ENCODE measurements at regions of chr22 and their contacts with region 1.

Region 1: GRCh38 chr22:41697126-41697775 is 2.1 kb upstream of the MEI1 start:
- DNase-seq: peak; percentile 73 to 94 (median 84)
- ATAC-seq: peak; percentile 91
- H3K4me3 ChIP-seq: peak overlapping the region; percentile 44
- H3K4me3 Mint-ChIP-seq: peak overlapping the region; percentile 44 to 80 (median 68)
- H3K27ac ChIP-seq: peak overlapping the region; percentile 5
- H3K27ac Mint-ChIP-seq: peak overlapping the region; percentile 16 to 90 (median 85)
- H3K4me1 ChIP-seq: peaks cover 7 to 10% of the 10 kb centered on the region in 2 donors
- H3K4me1 Mint-ChIP-seq: peaks cover 10 to 16% (median 13%) of the 10 kb centered on the region in 7 donors
- H3K27me3 ChIP-seq: no peaks in the 10 kb centered on the region
- H3K27me3 Mint-ChIP-seq: peaks cover 0 to 3% (median 0%) of the 10 kb centered on the region in 5 donors

Region 2: GRCh38 chr22:41666661-41667258 is 30.5 kb before region 1 on chr22:
- CTCF ChIA-PET with region 1: interaction called, 13 read pairs
- POLR2A ChIA-PET with region 1: interaction called, 4 read pairs
- intact Hi-C with region 1: loop called in 1 of 2 experiments (anchors 1 kb)
- DNase-seq: peak; percentile 88 to 97 (median 95)
- ATAC-seq: peak; percentile 98
- H3K4me3 ChIP-seq: peak overlapping the region; percentile 44
- H3K4me3 Mint-ChIP-seq: peak overlapping the region; percentile 75 to 87 (median 82)
- H3K27ac ChIP-seq: peak overlapping the region; percentile 72
- H3K27ac Mint-ChIP-seq: peak overlapping the region; percentile 91 to 99 (median 97)
- H3K4me1 ChIP-seq: peaks cover 7% of the 10 kb centered on the region in 2 donors
- H3K4me1 Mint-ChIP-seq: peaks cover 0 to 25% (median 10%) of the 10 kb centered on the region in 7 donors
- H3K27me3 ChIP-seq: no peaks in the 10 kb centered on the region
- H3K27me3 Mint-ChIP-seq: no peaks in the 10 kb centered on the region

Region 3: DNA sequence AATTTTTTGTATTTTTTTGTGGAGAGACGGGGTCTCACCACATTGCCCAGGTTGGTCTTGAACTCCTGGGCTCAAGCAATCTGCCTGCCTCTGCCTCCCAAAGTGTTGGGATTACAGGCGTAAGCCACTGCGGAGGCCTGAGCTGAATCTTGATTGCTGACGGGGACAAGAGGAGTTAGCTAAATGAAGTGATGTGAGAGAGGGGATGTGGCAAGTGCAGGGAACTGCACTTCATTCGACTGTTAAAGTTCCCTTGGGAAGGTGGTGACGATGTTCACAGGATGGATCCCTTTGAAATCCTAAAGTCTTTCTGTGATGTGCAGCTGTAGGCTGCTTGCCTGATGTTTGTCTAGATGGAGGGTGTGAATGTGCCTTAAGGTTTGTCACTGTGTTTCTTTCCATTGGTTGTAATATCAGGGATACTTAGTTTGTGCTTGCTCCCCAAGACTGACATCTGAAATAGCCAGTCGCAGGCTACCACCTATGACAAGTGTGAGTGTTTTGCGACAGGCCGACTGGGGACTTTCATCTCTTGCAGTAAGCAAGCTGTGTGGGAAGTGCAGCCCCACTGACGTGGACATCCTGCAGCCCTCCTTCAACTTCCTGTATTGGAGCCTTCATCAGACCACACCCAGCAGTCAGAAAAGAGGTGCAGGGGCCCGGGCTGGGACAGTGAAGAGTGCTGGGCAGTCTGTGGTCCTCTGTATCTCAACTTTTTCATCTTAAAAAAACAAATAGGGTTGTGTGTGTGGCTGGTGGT is 83.7 kb after region 1 on chr22:
- CTCF ChIA-PET with region 1: interaction called, 13 read pairs
- POLR2A ChIA-PET with region 1: interaction called, 28 read pairs
- intact Hi-C with region 1: no loop called
- DNase-seq: peak; percentile 64 to 99 (median 96)
- ATAC-seq: peak; percentile 97
- H3K4me3 ChIP-seq: peak overlapping the region; percentile 67
- H3K4me3 Mint-ChIP-seq: peak overlapping the region; percentile 77 to 93 (median 89)
- H3K27ac ChIP-seq: peak overlapping the region; percentile 88
- H3K27ac Mint-ChIP-seq: peak overlapping the region; percentile 98 to 100 (median 100)
- H3K4me1 ChIP-seq: peaks cover 19 to 25% of the 10 kb centered on the region in 2 donors
- H3K4me1 Mint-ChIP-seq: peaks cover 32 to 71% (median 51%) of the 10 kb centered on the region in 7 donors
- H3K27me3 ChIP-seq: no peaks in the 10 kb centered on the region
- H3K27me3 Mint-ChIP-seq: no peaks in the 10 kb centered on the region

Region 4: GRCh38 chr22:41857155-41857859 is 160.1 kb after region 1 on chr22:
- CTCF ChIA-PET with region 1: interaction called, 12 read pairs
- POLR2A ChIA-PET with region 1: no interaction called
- intact Hi-C with region 1: loop called (anchors 1 kb)
- DNase-seq: peak; percentile 27 to 76 (median 65)
- ATAC-seq: peak; percentile 87
- H3K4me3 ChIP-seq: no peak overlapping the region
- H3K4me3 Mint-ChIP-seq: peak overlapping the region; percentile 3 to 67 (median 36)
- H3K27ac ChIP-seq: no peak overlapping the region
- H3K27ac Mint-ChIP-seq: peak overlapping the region; percentile 62 to 91 (median 82)
- H3K4me1 ChIP-seq: peaks cover 17 to 26% of the 10 kb centered on the region in 2 donors
- H3K4me1 Mint-ChIP-seq: peaks cover 33 to 69% (median 54%) of the 10 kb centered on the region in 7 donors
- H3K27me3 ChIP-seq: no peaks in the 10 kb centered on the region
- H3K27me3 Mint-ChIP-seq: no peaks in the 10 kb centered on the region

Region 5: DNA sequence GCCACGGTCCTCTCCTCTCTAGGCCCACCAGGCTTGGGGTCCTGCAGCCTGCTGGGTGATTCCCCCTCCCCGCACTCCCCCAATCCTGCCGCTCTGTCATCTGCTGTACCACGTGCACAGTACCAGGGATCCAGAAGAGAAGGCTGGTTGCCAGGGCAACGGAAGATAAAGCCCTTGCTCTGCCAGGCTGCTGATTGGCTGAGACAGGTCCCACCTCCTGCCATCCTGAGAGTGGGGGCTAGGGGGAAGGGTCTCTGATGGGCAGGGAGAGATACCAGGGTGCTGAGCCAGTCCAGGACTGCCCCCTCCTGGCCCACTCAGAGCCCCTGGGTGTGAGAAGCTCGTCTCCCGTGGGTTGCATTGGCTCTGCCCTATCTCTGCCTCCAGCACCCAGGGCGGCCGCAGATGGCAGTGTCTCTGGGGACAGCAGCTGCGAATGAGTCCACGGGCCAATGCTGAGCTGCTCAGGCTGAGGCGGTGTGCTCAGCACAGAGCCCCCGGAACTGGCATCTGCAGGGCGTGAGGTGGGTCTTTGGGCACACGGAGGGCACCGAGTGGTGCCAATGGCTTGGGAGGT is 254.7 kb after region 1 on chr22 and contains the start of gene SMIM45:
- CTCF ChIA-PET with region 1: interaction called, 14 read pairs
- POLR2A ChIA-PET with region 1: interaction called, 4 read pairs
- intact Hi-C with region 1: loop called in 1 of 2 experiments (anchors 1 kb)
- DNase-seq: no peak
- ATAC-seq: no peak
- H3K4me3 ChIP-seq: no peak within 1 kb of the TSS
- H3K4me3 Mint-ChIP-seq: no peak within 1 kb of the TSS
- H3K27ac ChIP-seq: no peak within 1 kb of the TSS
- H3K27ac Mint-ChIP-seq: no peak within 1 kb of the TSS
- H3K4me1 ChIP-seq: peaks cover 0 to 13% of the 10 kb centered on the region in 2 donors
- H3K4me1 Mint-ChIP-seq: peaks cover 0 to 16% (median 3%) of the 10 kb centered on the region in 7 donors
- H3K27me3 ChIP-seq: no peaks in the 10 kb centered on the region
- H3K27me3 Mint-ChIP-seq: no peaks in the 10 kb centered on the region

Measured in naive thymus-derived CD4-positive, alpha-beta T cell (primary cell).